ENCODE measurements at regions of chr9 and their contacts with region 1.

Region 1: GRCh38 chr9:124776954-124777665 is at the start of gene OLFML2A:
- DNase-seq: no peak
- H3K4me3 ChIP-seq: peak within 1 kb of the TSS in 2 of 3 experiments; percentile 1 to 30
- H3K27ac ChIP-seq: no peak within 1 kb of the TSS
- H3K4me1 ChIP-seq: peaks cover 15% of the 10 kb centered on the region
- H3K27me3 ChIP-seq: peaks cover 0 to 7% of the 10 kb centered on the region in 2 experiments
- CTCF ChIP-seq: peak; percentile 28 to 47
- POLR2A ChIP-seq: no peak
- total RNA-seq, gene OLFML2A: 0.32 and 1.1 TPM in 2 replicates

Region 2: DNA sequence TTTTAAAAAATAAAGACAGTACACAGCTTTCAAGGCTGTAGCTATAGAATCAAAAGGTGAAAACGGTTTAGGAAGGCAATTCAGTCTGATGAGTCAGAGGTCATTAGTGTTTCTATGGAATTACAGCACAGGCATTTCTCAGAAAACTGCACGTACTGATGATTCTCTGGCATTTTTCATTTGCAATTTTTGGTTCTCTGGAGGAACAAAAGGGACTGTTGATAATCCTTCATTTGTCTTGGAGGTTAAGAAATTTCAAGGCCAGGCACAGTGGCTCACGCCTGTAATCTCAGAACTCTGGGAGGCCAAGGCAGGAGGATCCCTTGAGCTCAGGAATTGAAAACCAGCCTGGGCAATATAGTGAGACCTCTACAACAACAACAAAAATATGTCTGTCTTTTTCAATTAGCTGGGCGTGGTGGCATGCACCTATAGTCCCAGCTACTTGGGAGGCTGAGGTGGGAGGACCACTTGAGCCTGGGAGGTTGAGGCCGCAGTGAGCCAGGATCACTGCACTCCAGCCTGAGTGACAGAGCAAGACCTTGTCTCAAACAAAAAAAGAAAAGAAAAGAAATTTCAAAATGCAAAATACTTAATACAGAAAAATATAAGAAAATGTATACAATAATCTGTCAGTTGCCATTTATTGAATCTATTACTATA is 33.3 kb before region 1 on chr9:
- CTCF ChIA-PET with region 1: no interaction called
- POLR2A ChIA-PET with region 1: no interaction called
- dilution Hi-C with region 1: no loop called
- intact Hi-C with region 1: no loop called
- DNase-seq: no peak
- H3K4me3 ChIP-seq: no peak overlapping the region
- H3K27ac ChIP-seq: no peak overlapping the region
- H3K4me1 ChIP-seq: no peaks in the 10 kb centered on the region
- H3K27me3 ChIP-seq: no peaks in the 10 kb centered on the region
- CTCF ChIP-seq: no peak
- POLR2A ChIP-seq: no peak

Region 3: DNA sequence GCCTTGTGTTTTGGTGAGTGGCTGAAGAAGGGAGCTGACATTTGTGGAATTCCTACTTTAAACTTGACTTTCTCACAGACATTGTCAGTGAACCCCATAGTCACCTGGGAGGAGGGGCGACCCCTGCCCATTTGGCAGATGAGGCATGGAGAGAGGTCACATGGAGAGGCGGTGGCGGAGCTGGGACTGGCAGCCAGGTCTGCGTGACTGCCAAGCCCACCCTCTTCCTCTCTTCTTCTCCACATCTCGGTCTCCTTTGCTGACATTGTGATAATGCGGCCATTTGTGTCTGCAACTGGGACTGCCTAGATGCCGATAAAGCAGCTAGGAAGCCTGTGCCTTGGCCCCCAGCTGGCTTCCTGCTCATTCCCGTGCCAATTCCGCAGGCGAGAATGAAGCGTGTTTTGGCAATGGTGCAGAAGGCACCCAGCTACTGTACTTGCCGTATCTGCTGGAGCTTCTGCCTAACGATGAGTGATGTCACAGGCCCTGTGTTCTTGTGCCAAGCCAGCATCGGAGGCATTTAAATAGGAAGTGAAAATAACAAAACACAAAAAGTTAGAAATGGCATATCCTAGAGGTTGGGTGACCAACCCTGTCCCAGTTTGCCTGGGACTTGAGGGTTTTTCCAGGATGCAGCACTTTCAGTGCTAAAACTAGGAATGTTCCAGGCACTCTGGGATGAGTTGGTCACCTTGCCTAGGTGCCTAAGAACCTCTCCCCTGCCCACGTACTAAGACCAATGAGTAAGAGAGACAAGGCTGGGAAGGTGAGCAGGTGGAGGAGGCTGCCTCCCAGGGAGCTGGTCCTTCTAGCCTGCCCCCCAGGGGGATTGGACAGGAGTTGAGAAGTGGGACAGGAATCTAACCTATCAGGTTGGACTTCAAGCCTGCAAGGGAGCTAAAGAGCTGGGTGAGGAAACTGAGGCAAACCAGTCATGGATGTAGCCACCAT is 23.5 kb after region 1 on chr9:
- CTCF ChIA-PET with region 1: interaction called, 16 read pairs
- POLR2A ChIA-PET with region 1: no interaction called
- dilution Hi-C with region 1: no loop called
- intact Hi-C with region 1: no loop called
- DNase-seq: peak; percentile 63
- H3K4me3 ChIP-seq: no peak overlapping the region
- H3K27ac ChIP-seq: no peak overlapping the region
- H3K4me1 ChIP-seq: peaks cover 19% of the 10 kb centered on the region
- H3K27me3 ChIP-seq: peaks cover 10 to 12% of the 10 kb centered on the region in 2 experiments
- CTCF ChIP-seq: no peak
- POLR2A ChIP-seq: no peak

Region 4: GRCh38 chr9:124820698-124821623 is 43.9 kb after region 1 on chr9:
- CTCF ChIA-PET with region 1: interaction called, 3 read pairs
- POLR2A ChIA-PET with region 1: no interaction called
- dilution Hi-C with region 1: no loop called
- intact Hi-C with region 1: loop called (anchors 1 kb)
- DNase-seq: no peak
- H3K4me3 ChIP-seq: no peak overlapping the region
- H3K27ac ChIP-seq: no peak overlapping the region
- H3K4me1 ChIP-seq: no peaks in the 10 kb centered on the region
- H3K27me3 ChIP-seq: no peaks in the 10 kb centered on the region
- CTCF ChIP-seq: no peak
- POLR2A ChIP-seq: no peak